ENCODE measurements at regions of chr7 and their contacts with region 1.

Region 1: DNA sequence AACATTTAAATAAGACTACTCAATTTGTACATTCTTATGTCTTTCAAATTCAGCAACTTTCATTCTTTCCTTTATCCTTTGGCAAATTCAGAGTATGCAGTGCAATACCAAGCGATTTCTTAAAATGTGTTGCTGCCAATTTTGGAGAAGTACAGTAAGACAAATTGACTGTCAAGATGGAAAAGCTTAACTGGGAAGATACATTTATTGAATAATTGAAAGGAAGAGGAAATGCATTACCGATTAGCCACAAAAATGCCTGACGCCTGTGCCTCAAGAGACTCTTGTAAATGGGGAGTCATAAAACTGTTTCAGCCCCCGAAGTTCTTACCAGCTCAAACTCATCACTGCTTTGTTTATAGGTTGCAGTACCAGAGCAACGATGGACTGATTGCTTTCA is 373.3 kb upstream of the GALNT17 start:
- DNase-seq: no peak
- H3K4me3 ChIP-seq: no peak overlapping the region
- H3K4me3 Mint-ChIP-seq: no peak overlapping the region
- H3K27ac Mint-ChIP-seq: no peak overlapping the region
- H3K4me1 ChIP-seq: no peaks in the 10 kb centered on the region
- H3K4me1 Mint-ChIP-seq: no peaks in the 10 kb centered on the region
- H3K27me3 ChIP-seq: no peaks in the 10 kb centered on the region
- H3K27me3 Mint-ChIP-seq: no peaks in the 10 kb centered on the region
- CTCF ChIP-seq: no peak

Region 2: DNA sequence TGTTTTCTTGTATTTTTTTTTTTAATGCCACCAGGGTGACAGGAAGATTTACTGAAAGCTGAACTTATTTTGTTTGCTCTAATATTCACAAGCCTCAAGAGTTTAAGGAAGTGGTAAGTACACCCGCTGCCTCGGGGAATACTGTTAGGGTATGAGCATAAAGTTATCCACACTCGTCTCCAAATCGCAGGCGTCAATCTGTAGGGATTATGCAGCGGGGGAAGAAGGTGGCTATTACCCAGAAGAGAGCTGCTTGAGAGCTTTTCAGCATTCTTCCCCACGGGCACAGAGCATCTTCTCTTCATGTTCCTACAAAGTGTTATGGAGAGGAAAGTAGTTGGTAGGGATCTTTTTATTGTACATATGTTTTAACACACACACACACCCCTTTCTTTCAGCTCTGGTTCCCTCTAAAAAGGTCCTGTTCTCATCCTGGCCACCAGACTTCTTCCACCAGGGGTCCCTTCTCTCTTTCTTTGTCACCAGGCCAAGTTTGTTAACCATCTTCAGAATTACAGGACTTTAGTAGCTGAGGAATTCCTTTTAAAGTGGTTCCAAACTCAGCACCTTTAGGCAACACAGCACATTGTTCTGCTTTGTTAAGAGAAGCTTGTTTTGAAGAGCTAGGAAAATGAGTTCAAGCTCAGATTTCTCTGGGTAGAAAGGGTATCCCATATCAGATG is 38.3 kb before region 1 on chr7:
- CTCF ChIA-PET with region 1: no interaction called
- POLR2A ChIA-PET with region 1: no interaction called
- intact Hi-C with region 1: loop called (anchors 2 kb)
- DNase-seq: no peak
- H3K4me3 ChIP-seq: no peak overlapping the region
- H3K4me3 Mint-ChIP-seq: no peak overlapping the region
- H3K27ac Mint-ChIP-seq: peak overlapping the region; percentile 29
- H3K4me1 ChIP-seq: no peaks in the 10 kb centered on the region
- H3K4me1 Mint-ChIP-seq: peaks cover 10% of the 10 kb centered on the region
- H3K27me3 ChIP-seq: no peaks in the 10 kb centered on the region
- H3K27me3 Mint-ChIP-seq: no peaks in the 10 kb centered on the region
- CTCF ChIP-seq: peak in 1 of 2 experiments; percentile 1

Measured in Caco-2 (cell line).